ENCODE measurements at regions of chr15 and their contacts with region 1.

Region 1: GRCh38 chr15:38196076-38196475 is 56.6 kb upstream of the SPRED1 start:
- DNase-seq: no peak
- ATAC-seq: no peak
- H3K4me3 ChIP-seq: no peak overlapping the region
- H3K27ac ChIP-seq: no peak overlapping the region
- H3K4me1 ChIP-seq: no peaks in the 10 kb centered on the region
- H3K27me3 ChIP-seq: peaks cover 14% of the 10 kb centered on the region
- CTCF ChIP-seq: no peak
- POLR2A ChIP-seq: no peak
- RAD21 ChIP-seq: no peak

Region 2: DNA sequence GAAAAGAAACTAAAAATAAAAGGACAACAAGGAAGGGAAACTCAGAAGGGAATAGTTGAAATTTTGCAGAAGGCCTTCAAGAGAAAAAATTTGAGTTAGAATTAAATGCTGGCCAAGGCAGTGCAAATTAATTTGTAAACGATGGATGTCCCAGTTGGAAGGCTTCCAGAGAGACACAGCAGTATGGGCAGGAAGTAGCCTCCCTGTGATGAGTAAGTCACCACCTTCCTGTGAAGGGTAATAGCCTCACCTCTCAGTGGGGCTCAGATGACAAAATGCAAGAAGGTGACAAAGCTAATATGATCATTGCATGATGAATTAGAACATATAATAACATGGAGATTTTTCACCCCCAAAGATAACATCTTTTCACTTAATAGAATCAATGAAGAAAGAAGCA is 288.9 kb before region 1 on chr15:
- CTCF ChIA-PET with region 1: no interaction called
- POLR2A ChIA-PET with region 1: no interaction called
- dilution Hi-C with region 1: no loop called
- in situ Hi-C with region 1: no loop called
- intact Hi-C with region 1: no loop called
- DNase-seq: peak; percentile 22
- ATAC-seq: 0 out of 2 replicates have a peak, but pooled peaks have one; percentile 35
- H3K4me3 ChIP-seq: no peak overlapping the region
- H3K27ac ChIP-seq: no peak overlapping the region
- H3K4me1 ChIP-seq: no peaks in the 10 kb centered on the region
- H3K27me3 ChIP-seq: no peaks in the 10 kb centered on the region
- CTCF ChIP-seq: no peak
- POLR2A ChIP-seq: no peak
- RAD21 ChIP-seq: no peak

Region 3: GRCh38 chr15:38164061-38164460 is 32.0 kb before region 1 on chr15:
- CTCF ChIA-PET with region 1: no interaction called
- POLR2A ChIA-PET with region 1: no interaction called
- dilution Hi-C with region 1: no loop called
- in situ Hi-C with region 1: no loop called
- intact Hi-C with region 1: loop called (anchors 2 kb)
- DNase-seq: no peak
- ATAC-seq: no peak
- H3K4me3 ChIP-seq: no peak overlapping the region
- H3K27ac ChIP-seq: no peak overlapping the region
- H3K4me1 ChIP-seq: peaks cover 2% of the 10 kb centered on the region; the same call in 1 of the 2 replicates
- H3K27me3 ChIP-seq: peaks cover 39% of the 10 kb centered on the region
- CTCF ChIP-seq: no peak
- POLR2A ChIP-seq: no peak
- RAD21 ChIP-seq: no peak

Region 4: DNA sequence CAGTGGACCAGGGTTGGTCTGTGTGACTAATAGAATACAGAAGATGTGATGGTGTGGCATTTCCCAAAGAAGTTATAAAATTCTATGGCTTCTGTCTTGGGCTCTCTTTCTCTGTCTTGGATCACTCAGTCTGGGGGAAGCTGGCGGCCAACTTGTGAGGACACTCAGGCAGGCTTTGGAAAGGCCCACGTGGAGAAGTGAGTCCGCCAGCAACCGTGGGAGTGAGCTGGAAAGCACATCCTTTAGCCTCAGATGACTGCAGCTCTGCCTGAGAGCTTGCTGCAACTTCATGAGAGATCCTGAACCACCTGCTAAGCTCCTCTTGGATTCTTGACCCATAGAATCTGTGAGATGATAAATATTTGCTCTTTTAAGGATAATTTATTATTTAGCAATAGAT is 440.5 kb after region 1 on chr15:
- CTCF ChIA-PET with region 1: no interaction called
- POLR2A ChIA-PET with region 1: no interaction called
- dilution Hi-C with region 1: no loop called
- in situ Hi-C with region 1: no loop called
- intact Hi-C with region 1: no loop called
- DNase-seq: no peak
- ATAC-seq: no peak
- H3K4me3 ChIP-seq: no peak overlapping the region
- H3K27ac ChIP-seq: no peak overlapping the region
- H3K4me1 ChIP-seq: no peaks in the 10 kb centered on the region
- H3K27me3 ChIP-seq: peaks cover 53% of the 10 kb centered on the region
- CTCF ChIP-seq: no peak
- POLR2A ChIP-seq: no peak
- RAD21 ChIP-seq: no peak

Measured in IMR-90 (cell line).